Psoas muscle (tissue), 8 donors: ENCODE measurements at regions of chr11 and their contacts with region 1.

Region 1: GRCh38 chr11:68569357-68569756 is 108.8 kb downstream of the PPP6R3 start:
- DNase-seq: no peak
- ATAC-seq: peak in 1 of 4 donors; percentile 46
- H3K4me3 ChIP-seq: no peak overlapping the region
- H3K27ac ChIP-seq: peak overlapping the region; percentile 23
- H3K4me1 ChIP-seq: peaks cover 49% of the 10 kb centered on the region
- H3K27me3 ChIP-seq: no peaks in the 10 kb centered on the region
- CTCF ChIP-seq: no peak

Region 2: DNA sequence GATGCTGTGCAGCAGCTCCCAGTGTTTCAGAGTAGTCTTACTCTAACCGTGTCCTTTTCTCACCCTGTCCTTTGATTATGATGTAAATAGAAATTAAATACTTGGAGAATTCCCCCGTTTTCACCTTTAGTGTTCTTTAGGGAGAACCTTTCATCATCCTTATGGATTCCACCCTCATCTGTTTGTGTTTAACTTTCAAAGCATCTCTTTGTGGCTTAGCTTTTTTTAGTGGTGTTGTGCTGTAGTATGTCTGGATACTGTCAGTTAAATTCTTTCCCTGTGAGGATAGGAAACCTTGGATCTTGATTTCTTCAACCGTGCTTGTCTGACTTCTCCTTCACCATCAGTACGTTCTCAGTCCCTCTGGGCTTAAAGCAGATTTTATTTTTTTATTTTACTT is 60.3 kb before region 1 on chr11:
- intact Hi-C with region 1: loop called in 1 of 2 experiments (anchors 2 kb)
- DNase-seq: no peak
- ATAC-seq: no peak
- H3K4me3 ChIP-seq: no peak overlapping the region
- H3K27ac ChIP-seq: no peak overlapping the region
- H3K4me1 ChIP-seq: peaks cover 74% of the 10 kb centered on the region
- H3K27me3 ChIP-seq: no peaks in the 10 kb centered on the region
- CTCF ChIP-seq: no peak

Region 3: DNA sequence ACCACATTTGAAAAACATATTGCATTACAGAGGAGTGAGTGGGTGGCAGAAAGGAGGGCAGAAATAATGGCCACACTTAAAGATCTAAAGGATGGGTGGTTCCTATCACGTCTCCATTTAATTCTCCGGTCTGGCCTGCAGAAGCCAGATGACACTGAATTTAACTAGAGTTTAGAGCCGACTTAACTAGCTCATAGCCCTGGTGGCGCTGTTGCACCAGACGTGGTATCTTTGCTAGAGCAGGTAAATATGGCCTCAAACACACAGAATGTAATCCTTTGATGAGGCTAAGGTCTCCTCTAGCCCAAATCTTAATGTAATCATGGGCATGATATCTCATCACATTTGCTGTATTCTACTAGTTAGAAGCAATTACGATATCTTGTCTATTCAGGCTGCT is 63.4 kb after region 1 on chr11:
- intact Hi-C with region 1: no loop called
- DNase-seq: no peak
- ATAC-seq: no peak
- H3K4me3 ChIP-seq: no peak overlapping the region
- H3K27ac ChIP-seq: no peak overlapping the region
- H3K4me1 ChIP-seq: no peaks in the 10 kb centered on the region
- H3K27me3 ChIP-seq: no peaks in the 10 kb centered on the region
- CTCF ChIP-seq: no peak